ENCODE measurements at regions of chr17 and their contacts with region 1.

Region 1: DNA sequence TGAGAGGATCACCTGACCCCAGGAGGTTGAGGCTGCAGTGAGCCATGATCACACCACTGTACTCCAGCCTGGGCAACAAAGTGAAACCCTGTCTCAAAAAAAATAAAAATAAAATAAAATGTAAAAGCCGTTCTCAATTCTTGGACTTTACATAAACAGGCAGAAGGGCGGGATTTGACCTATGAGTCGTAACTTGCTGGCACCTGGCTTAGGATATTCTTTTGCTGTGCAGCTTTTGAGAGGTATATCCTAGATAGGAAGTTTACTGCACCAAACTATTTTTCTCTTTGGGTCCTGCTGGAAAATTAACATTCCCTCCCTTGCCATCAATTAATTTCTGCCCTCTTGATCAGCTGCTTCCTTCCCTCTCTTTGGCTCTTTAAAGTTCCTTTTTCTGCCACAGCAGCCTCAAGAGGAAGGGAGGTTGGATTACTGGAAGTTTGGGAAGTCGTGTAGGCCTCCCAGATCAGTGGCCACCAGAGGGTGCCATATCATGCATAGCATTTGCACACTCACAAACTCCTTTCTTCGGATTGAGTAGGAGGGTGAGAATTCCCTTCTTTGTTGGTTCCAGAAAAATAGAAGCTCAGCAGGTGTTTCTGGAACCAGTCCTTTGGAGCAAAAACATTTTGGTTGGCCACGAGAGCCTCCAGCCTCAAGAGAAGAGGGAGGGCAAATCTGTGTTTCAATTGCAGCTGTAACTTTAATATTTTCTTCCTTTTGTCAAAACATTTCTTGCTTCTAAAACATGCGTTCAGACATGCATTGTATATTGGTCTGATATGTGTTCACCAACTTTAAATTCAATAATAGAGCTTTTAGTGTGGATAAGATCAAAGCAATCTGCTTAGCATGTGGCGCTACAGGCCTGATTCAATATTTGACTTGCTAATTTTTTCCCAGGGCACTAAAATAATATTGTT is 147.3 kb downstream of the CCDC182 start:
- DNase-seq: peak; percentile 60 to 93 (median 83)

Region 2: GRCh38 chr17:57657201-57657600 is 59.4 kb after region 1 on chr17:
- intact Hi-C with region 1: no loop called
- DNase-seq: peak in 19 of 42 donors; percentile 9 to 68 (median 39)

Region 3: DNA sequence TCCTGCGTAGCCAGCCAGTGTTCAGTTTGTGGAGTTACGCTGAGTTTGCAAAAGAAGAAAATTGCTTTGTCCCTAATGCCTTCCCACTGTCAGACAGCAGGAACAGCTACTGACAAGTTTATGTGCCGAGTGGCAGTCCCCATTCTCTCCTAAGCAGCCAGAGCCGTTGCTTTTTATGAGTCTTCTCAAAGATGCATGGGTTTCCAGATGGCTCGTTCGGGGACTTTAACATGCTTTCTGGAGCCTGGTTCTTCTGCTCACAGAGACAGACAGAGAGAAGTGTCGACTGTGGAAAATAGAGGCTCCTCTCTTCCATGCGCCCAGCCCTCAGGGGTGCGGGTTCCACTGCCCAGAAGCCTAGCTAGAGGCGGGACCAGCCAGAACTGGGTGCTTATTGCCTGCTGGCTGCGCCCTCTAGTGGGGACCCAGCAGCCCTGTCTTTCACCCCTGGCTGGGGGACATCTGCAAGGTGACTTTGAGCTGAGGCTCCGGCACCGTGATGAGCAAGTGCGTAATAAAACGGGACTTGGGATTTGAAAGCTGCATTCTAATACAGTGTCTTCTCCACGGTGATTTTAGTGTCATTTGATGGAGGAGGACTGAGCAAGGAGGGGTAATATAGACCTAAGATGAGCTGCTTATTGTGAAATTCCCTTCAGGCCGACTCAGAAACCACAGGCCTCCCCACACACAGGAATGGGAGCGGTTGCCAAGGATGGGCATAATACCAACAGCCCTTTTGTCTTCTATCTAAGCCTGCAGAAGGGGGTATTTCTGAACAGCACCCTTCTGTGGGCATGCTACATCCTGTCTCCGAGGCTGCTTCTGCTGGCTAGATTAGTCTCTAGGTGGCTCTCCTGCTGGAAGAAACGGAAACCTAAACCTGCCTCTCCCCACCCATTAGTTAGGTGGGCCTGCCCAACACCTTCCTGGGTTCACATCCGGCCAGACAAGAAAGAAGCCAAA is 74.2 kb after region 1 on chr17:
- intact Hi-C with region 1: loop called (anchors 5 kb)
- DNase-seq: peak; percentile 73 to 95 (median 87)